ENCODE measurements at regions of chr12 and their contacts with region 1.

Region 1: DNA sequence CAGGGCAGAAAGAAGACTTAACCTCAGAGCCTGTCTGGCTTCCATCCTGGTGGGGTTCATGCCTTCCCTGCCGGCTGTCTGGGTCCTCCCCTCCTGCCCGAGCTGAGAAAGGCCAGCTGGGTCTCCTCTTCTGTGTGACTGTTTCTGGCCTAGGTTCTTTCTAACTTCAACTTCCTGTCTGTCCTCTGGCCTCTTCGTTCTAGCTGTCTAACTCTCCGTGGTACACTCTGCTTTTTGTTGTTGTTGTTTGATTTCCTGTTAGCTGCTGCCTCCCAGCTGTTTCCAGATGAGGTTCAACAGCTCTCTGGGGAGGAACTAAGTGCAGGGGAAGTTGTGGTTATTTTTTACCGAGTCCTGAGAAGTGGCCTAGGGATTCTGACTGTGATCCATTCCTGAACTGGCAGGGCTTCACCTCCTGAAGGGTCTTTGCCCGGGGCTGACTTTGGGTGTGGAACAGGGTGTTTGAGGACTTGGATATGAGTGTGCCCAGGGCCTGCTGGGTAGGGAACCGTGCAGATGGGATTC is 3.2 kb downstream of the MLXIP start:
- DNase-seq: no peak
- H3K4me3 ChIP-seq: peak overlapping the region; percentile 73
- H3K27ac ChIP-seq: peak overlapping the region; percentile 84
- H3K4me1 ChIP-seq: peaks cover 32% of the 10 kb centered on the region
- H3K27me3 ChIP-seq: no peaks in the 10 kb centered on the region
- CTCF ChIP-seq: no peak

Region 2: DNA sequence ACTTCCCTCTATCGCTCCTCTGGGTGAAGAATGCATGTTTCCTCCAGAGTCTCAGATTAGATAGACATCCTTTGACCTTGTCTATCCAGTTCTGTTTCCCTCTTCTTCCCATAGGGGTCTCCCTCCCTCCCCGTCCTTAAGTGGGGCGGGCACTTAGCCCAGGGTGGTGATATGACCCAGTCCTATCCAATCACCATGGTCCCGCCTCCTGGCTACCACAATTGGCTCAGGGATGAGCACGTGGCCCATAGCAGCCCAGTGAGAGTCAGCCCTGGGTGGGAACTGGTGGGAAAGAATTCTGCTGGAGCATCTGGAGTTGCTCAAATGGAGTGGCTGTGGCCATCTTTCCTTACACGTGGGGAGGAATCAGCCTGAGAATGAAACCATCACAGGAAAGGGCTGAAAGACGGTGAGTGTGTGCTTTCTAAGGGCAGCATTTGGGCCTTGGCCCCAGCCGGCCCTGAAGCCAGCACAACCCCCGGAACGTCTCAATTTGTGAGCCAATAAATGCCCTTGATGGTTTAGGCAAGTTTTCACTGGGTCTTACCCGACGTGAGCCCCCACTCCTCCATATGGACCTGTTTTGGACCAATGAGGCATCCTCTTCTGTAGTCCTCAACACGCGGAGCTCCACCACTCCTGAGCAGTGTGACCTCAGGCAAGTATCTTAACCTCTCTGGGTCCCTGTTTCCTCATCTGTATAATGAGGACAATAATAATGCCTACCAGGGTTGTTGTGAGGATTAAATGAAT is 17.6 kb before region 1 on chr12:
- CTCF ChIA-PET with region 1: interaction called, 8 read pairs
- POLR2A ChIA-PET with region 1: interaction called, 6 read pairs
- intact Hi-C with region 1: loop called (anchors 1 kb)
- DNase-seq: peak; percentile 93 to 95
- H3K4me3 ChIP-seq: peak overlapping the region; percentile 59
- H3K27ac ChIP-seq: peak overlapping the region; percentile 88
- H3K4me1 ChIP-seq: peaks cover 39% of the 10 kb centered on the region
- H3K27me3 ChIP-seq: no peaks in the 10 kb centered on the region
- CTCF ChIP-seq: peak; percentile 61

Region 3: GRCh38 chr12:122097927-122098756 is 16.4 kb after region 1 on chr12:
- CTCF ChIA-PET with region 1: interaction called, 8 read pairs
- POLR2A ChIA-PET with region 1: interaction called, 3 read pairs
- intact Hi-C with region 1: loop called (anchors 2 kb)
- DNase-seq: peak; percentile 77 to 89
- H3K4me3 ChIP-seq: no peak overlapping the region
- H3K27ac ChIP-seq: peak overlapping the region; percentile 57
- H3K4me1 ChIP-seq: peaks cover 38% of the 10 kb centered on the region
- H3K27me3 ChIP-seq: no peaks in the 10 kb centered on the region
- CTCF ChIP-seq: no peak

Region 4: GRCh38 chr12:122123051-122123760 is 41.4 kb after region 1 on chr12:
- CTCF ChIA-PET with region 1: interaction called, 7 read pairs
- POLR2A ChIA-PET with region 1: no interaction called
- intact Hi-C with region 1: loop called (anchors 1 kb)
- DNase-seq: peak; percentile 53 to 70
- H3K4me3 ChIP-seq: no peak overlapping the region
- H3K27ac ChIP-seq: peak overlapping the region; percentile 49
- H3K4me1 ChIP-seq: peaks cover 5% of the 10 kb centered on the region; the same call in 1 of the 2 replicates
- H3K27me3 ChIP-seq: no peaks in the 10 kb centered on the region
- CTCF ChIP-seq: peak; percentile 89

Region 5: GRCh38 chr12:123546281-123546680 is 1464.5 kb after region 1 on chr12:
- CTCF ChIA-PET with region 1: no interaction called
- POLR2A ChIA-PET with region 1: no interaction called
- intact Hi-C with region 1: no loop called
- DNase-seq: peak in 1 of 2 experiments; percentile 14
- H3K4me3 ChIP-seq: no peak overlapping the region
- H3K27ac ChIP-seq: no peak overlapping the region
- H3K4me1 ChIP-seq: no peaks in the 10 kb centered on the region
- H3K27me3 ChIP-seq: peaks cover 10% of the 10 kb centered on the region; the same call in 1 of the 2 replicates
- CTCF ChIP-seq: no peak

Measured in PC-9 (cell line).